ENCODE measurements at regions of chr6 and their contacts with region 1.

Region 1: GRCh38 chr6:87825821-87826221 is 123.8 kb upstream of the AKIRIN2 start:
- DNase-seq: no peak
- H3K4me3 ChIP-seq: no peak overlapping the region
- H3K27ac ChIP-seq: peak overlapping the region in 1 of 4 donors; percentile 53
- H3K4me1 ChIP-seq: peaks cover 0 to 11% (median 0%) of the 10 kb centered on the region in 4 donors
- H3K27me3 ChIP-seq: no peaks in the 10 kb centered on the region
- CTCF ChIP-seq: no peak
- EP300 ChIP-seq: no peak
- POLR2A ChIP-seq: no peak

Region 2: GRCh38 chr6:87791029-87791428 is 34.8 kb before region 1 on chr6:
- in situ Hi-C with region 1: no loop called
- intact Hi-C with region 1: loop called (anchors 2 kb)
- DNase-seq: no peak
- H3K4me3 ChIP-seq: no peak overlapping the region
- H3K27ac ChIP-seq: no peak overlapping the region
- H3K4me1 ChIP-seq: peaks cover 0 to 11% (median 0%) of the 10 kb centered on the region in 4 donors
- H3K27me3 ChIP-seq: no peaks in the 10 kb centered on the region
- CTCF ChIP-seq: no peak
- EP300 ChIP-seq: no peak
- POLR2A ChIP-seq: no peak

Region 3: GRCh38 chr6:88426005-88426404 is 600.2 kb after region 1 on chr6:
- in situ Hi-C with region 1: no loop called
- intact Hi-C with region 1: no loop called
- DNase-seq: no peak
- H3K4me3 ChIP-seq: no peak overlapping the region
- H3K27ac ChIP-seq: no peak overlapping the region
- H3K4me1 ChIP-seq: no peaks in the 10 kb centered on the region
- H3K27me3 ChIP-seq: no peaks in the 10 kb centered on the region
- CTCF ChIP-seq: no peak
- EP300 ChIP-seq: no peak
- POLR2A ChIP-seq: no peak

Measured in transverse colon (tissue), 4 donors.